ENCODE measurements at regions of chr12 and their contacts with region 1.

Region 1: DNA sequence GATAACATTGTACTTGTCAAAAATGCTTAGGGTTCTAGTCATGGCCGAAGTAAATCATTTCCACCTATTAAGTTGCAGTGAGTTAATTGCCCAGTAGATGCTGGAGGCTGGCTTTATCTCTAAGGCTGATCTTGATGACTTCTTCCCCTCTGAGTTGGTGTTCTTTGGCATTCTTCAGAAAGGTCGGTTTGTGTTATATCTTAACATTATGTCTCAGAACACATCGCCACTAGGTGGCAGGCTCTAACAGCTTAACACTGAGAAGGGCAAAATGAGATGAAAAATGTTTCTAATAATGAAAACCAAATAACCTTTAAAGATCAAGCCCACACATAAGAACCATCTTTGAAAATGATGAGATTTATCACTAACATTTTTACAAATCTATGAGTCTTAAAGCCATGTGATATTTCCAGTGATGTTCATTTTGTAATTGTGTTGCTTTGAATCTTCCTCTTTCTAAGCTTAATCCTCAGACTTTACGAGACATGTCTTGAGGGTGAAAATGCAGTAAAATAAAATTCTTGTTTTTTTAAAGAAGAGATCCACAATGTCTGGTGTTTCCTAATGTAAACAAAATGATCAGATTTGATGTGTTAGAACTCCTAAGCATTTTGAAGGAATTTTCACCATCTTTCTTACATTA is 28.6 kb downstream of the SUDS3 start:
- DNase-seq: peak; percentile 65 to 78 (median 70)
- ATAC-seq: peak; percentile 60
- H3K4me3 ChIP-seq: no peak overlapping the region
- H3K27ac ChIP-seq: no peak overlapping the region
- H3K4me1 ChIP-seq: peaks cover 5% of the 10 kb centered on the region
- H3K27me3 ChIP-seq: no peaks in the 10 kb centered on the region
- CTCF ChIP-seq: peak; percentile 12 to 81 (median 69)
- POLR2A ChIP-seq: no peak

Region 2: GRCh38 chr12:118498181-118498580 is 93.2 kb after region 1 on chr12:
- intact Hi-C with region 1: no loop called
- DNase-seq: peak; percentile 12 to 46 (median 21)
- ATAC-seq: peak; percentile 71
- H3K4me3 ChIP-seq: no peak overlapping the region
- H3K27ac ChIP-seq: no peak overlapping the region
- H3K4me1 ChIP-seq: peaks cover 6% of the 10 kb centered on the region
- H3K27me3 ChIP-seq: no peaks in the 10 kb centered on the region
- CTCF ChIP-seq: peak in 3 of 7 experiments; percentile 30 to 33 (median 31)
- POLR2A ChIP-seq: no peak

Region 3: DNA sequence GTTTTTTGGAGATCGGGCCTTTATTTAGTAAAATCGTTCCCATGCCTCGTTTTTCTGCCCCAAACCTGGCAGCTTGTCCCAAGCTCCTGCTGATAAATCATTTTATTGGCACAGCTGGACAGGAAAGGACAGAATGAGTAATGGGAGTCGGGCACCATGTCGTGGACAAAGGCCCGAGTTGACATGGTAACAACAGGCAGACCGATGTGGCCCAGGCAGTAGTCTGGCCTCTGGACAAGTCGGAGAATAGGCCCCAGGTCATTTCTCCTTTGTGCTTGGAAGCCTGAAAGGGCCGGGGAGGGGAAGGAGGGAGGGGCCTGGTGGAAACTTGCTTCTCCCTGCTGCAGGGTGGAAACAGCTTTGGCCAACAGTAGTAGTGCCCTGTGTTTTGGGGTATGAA is 206.3 kb after region 1 on chr12:
- intact Hi-C with region 1: no loop called
- DNase-seq: peak; percentile 54 to 87 (median 78)
- ATAC-seq: peak; percentile 95
- H3K4me3 ChIP-seq: no peak overlapping the region
- H3K27ac ChIP-seq: peak overlapping the region in 3 of 4 donors; percentile 48 to 66 (median 58)
- H3K4me1 ChIP-seq: peaks cover 18% of the 10 kb centered on the region
- H3K27me3 ChIP-seq: no peaks in the 10 kb centered on the region
- CTCF ChIP-seq: no peak
- POLR2A ChIP-seq: no peak

Region 4: GRCh38 chr12:118625050-118625675 is 220.2 kb after region 1 on chr12:
- intact Hi-C with region 1: loop called (anchors 5 kb)
- DNase-seq: no peak
- ATAC-seq: no peak
- H3K4me3 ChIP-seq: no peak overlapping the region
- H3K27ac ChIP-seq: no peak overlapping the region
- H3K4me1 ChIP-seq: no peaks in the 10 kb centered on the region
- H3K27me3 ChIP-seq: no peaks in the 10 kb centered on the region
- CTCF ChIP-seq: no peak
- POLR2A ChIP-seq: no peak

Region 5: GRCh38 chr12:119036878-119037825 is 632.2 kb after region 1 on chr12:
- intact Hi-C with region 1: loop called (anchors 10 kb)
- DNase-seq: peak; percentile 13 to 40 (median 20)
- ATAC-seq: no peak
- H3K4me3 ChIP-seq: no peak overlapping the region
- H3K27ac ChIP-seq: no peak overlapping the region
- H3K4me1 ChIP-seq: no peaks in the 10 kb centered on the region
- H3K27me3 ChIP-seq: no peaks in the 10 kb centered on the region
- CTCF ChIP-seq: peak; percentile 16 to 55 (median 48)
- POLR2A ChIP-seq: no peak